Panc1 (cell line): ENCODE measurements at regions of chr1 and their contacts with region 1.

Region 1: DNA sequence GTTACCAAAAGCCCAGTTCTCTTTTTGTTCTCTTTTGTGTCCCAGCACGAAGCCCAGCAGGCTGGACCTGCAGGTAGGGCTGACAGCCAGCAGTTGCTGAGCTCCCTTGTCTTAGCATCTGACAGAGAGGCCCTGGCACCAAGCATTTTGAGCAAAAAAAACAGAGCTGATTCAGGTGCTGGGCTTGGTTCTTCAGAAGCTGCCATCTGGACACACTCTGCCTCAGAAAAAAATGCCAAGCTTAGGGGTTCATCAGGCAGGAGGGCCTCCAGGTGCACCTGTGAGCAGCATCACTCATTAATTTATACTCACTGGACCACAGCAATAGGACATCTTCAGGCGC is 167.1 kb upstream of the PLD5 start:
- DNase-seq: no peak
- ATAC-seq: peak; percentile 65; the same call in 1 of the 2 replicates
- H3K4me3 ChIP-seq: peak overlapping the region in 1 of 2 experiments; percentile 54; a peak in 3 of 4 replicates
- H3K27ac ChIP-seq: no peak overlapping the region
- H3K4me1 ChIP-seq: no peaks in the 10 kb centered on the region
- H3K27me3 ChIP-seq: no peaks in the 10 kb centered on the region
- CTCF ChIP-seq: no peak

Region 2: DNA sequence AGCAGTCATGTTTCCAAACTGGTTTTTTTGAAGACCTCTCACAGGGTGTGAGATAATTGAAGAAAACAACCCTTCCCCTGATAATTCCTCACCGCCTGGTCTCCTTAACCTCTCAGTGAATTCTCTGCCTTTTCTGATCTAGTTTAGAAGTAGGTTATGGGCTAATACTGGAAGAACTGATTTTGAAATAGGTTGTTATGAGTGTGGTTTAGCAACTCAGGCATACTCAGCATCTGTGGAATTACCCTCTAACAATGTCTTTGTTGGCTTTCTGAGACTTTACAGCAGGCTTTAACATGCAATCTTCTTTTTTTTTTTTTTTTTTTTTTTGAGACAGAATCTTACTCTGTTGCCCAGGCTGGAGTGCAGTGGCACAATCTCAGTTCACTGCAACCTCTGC is 156.8 kb before region 1 on chr1:
- CTCF ChIA-PET with region 1: interaction called, 13 read pairs
- POLR2A ChIA-PET with region 1: no interaction called
- in situ Hi-C with region 1: no loop called
- intact Hi-C with region 1: no loop called
- DNase-seq: no peak
- ATAC-seq: no peak
- H3K4me3 ChIP-seq: no peak overlapping the region
- H3K27ac ChIP-seq: no peak overlapping the region
- H3K4me1 ChIP-seq: no peaks in the 10 kb centered on the region
- H3K27me3 ChIP-seq: no peaks in the 10 kb centered on the region
- CTCF ChIP-seq: no peak